ENCODE measurements at regions of chr3 and their contacts with region 1.

Region 1: DNA sequence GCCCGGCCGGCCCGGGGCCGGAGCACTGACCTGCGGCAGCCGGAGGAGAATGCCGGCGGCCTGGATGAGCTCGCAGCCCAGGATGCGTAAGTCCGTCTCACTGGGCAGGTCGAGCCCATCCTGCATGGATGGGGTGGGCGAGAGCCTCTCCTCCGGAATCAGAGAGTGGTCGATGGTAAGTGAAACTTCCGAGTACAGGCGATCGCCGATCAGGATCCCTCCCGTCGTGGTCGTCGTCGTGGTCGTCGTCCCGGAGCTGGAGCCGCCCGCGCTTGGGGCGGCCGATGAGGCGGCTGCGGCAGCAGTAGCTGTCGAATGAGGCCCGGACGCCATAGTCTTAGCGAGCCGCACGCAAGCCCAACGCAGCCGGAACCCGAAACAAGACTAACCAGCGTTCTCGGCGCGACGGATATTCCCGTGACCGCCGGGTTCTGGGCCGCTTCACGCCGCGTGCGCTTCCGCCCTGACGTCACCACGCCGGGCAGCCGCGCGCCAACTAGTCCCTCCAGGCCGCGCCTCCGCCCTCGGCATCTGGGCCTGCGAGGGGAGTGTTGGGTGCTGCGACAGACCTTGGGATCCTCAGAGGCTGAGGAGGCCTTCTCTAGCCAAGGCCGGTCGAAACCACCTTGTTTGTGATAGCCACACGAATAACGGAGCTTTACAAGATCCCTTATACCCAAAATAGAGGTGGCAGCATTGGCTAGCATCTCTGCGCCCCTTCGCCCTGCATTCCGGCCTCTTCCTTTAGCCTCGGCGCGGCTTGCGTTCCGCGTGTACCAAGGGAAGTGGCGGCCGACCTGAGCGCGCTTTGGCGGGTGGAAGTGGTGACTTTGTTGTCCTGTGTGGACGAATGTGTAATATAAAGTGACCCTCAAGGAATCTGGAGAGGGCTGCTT is at the start of gene CCNL1:
- DNase-seq: peak; percentile 98
- ATAC-seq: peak; percentile 81
- H3K4me3 Mint-ChIP-seq: peak within 1 kb of the TSS; percentile 83
- H3K27ac Mint-ChIP-seq: peak within 1 kb of the TSS; percentile 85
- H3K4me1 Mint-ChIP-seq: peaks cover 44% of the 10 kb centered on the region
- H3K27me3 Mint-ChIP-seq: no peaks in the 10 kb centered on the region
- total RNA-seq, gene CCNL1: 276 to 280 TPM

Region 2: GRCh38 chr3:156483961-156484787 is 675.8 kb before region 1 on chr3:
- POLR2A ChIA-PET with region 1: interaction called, 12 read pairs
- DNase-seq: peak; percentile 44
- ATAC-seq: peak; percentile 87
- H3K4me3 Mint-ChIP-seq: peak overlapping the region; percentile 81
- H3K27ac Mint-ChIP-seq: peak overlapping the region; percentile 88
- H3K4me1 Mint-ChIP-seq: peaks cover 25% of the 10 kb centered on the region
- H3K27me3 Mint-ChIP-seq: peaks cover under 1% of the 10 kb centered on the region

Region 3: GRCh38 chr3:157021684-157022083 is 138.3 kb before region 1 on chr3:
- POLR2A ChIA-PET with region 1: no interaction called
- DNase-seq: no peak
- ATAC-seq: no peak
- H3K4me3 Mint-ChIP-seq: no peak overlapping the region
- H3K27ac Mint-ChIP-seq: no peak overlapping the region
- H3K4me1 Mint-ChIP-seq: peaks cover 5% of the 10 kb centered on the region
- H3K27me3 Mint-ChIP-seq: peaks cover 2% of the 10 kb centered on the region

Region 4: DNA sequence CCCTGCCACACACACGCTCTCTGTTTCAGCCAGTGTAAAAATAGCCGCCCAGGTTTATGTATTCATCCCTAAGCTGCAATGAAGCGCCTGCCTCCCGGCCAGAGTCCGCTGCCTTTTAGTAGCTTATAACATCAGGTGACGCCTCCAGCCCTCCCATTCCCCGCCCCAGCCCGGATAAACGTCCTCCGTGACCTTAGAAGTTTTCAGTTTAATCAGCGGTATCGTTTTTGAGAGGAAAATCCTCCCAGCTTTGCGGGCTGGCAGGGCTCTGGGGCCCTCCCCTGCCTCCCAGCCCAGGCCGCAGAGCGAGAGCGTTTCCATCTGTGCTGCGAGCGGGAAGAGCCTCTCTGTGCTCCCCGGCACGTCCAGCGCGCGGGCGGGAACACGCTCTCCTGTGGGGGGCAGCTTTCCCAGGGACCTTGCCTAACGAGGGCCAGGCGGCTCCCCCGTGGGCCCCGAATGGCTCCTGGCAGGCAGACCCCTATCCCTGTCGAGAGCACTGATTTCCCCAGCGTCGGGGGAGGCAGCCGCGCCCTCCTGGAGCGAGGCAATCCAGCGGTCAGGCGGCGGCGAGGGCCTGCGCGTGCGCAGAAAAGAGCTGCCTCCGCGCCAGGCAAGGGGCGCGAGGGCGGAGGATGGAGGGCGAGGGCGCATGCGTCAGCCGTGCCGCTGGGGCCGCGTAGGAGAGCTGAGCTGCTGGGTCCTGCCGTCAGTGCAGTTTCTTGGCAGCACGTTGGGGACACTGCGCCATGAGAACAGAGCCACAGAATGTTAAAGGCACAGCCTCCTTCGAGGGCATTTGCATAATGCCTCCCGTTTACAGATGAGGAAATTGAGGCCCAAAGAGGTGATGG is 71.2 kb before region 1 on chr3:
- POLR2A ChIA-PET with region 1: interaction called, 22 read pairs
- DNase-seq: peak; percentile 97
- ATAC-seq: peak; percentile 96
- H3K4me3 Mint-ChIP-seq: peak overlapping the region; percentile 88
- H3K27ac Mint-ChIP-seq: peak overlapping the region; percentile 93
- H3K4me1 Mint-ChIP-seq: peaks cover 40% of the 10 kb centered on the region
- H3K27me3 Mint-ChIP-seq: no peaks in the 10 kb centered on the region

Region 5: GRCh38 chr3:157148196-157148889 is 11.7 kb before region 1 on chr3:
- POLR2A ChIA-PET with region 1: interaction called, 15 read pairs
- DNase-seq: no peak
- ATAC-seq: no peak
- H3K4me3 Mint-ChIP-seq: no peak overlapping the region
- H3K27ac Mint-ChIP-seq: no peak overlapping the region
- H3K4me1 Mint-ChIP-seq: peaks cover 17% of the 10 kb centered on the region
- H3K27me3 Mint-ChIP-seq: no peaks in the 10 kb centered on the region

Region 6: GRCh38 chr3:157226173-157226847 is 66.3 kb after region 1 on chr3:
- POLR2A ChIA-PET with region 1: interaction called, 11 read pairs
- DNase-seq: no peak
- ATAC-seq: peak; percentile 54
- H3K4me3 Mint-ChIP-seq: peak overlapping the region; percentile 2
- H3K27ac Mint-ChIP-seq: peak overlapping the region; percentile 56
- H3K4me1 Mint-ChIP-seq: peaks cover 9% of the 10 kb centered on the region
- H3K27me3 Mint-ChIP-seq: no peaks in the 10 kb centered on the region